ENCODE measurements at regions of chr12 and their contacts with region 1.

Region 1: GRCh38 chr12:125402874-125403789 is 337.9 kb downstream of the AACS start:
- DNase-seq: no peak
- ATAC-seq: no peak
- H3K4me3 ChIP-seq: no peak overlapping the region
- H3K27ac ChIP-seq: no peak overlapping the region
- H3K4me1 ChIP-seq: no peaks in the 10 kb centered on the region
- H3K27me3 ChIP-seq: no peaks in the 10 kb centered on the region

Region 2: GRCh38 chr12:125183187-125184067 is 219.7 kb before region 1 on chr12:
- intact Hi-C with region 1: loop called in 2 of 4 experiments (anchors 5 to 10 kb)
- DNase-seq: peak; percentile 75 to 89 (median 87)
- ATAC-seq: peak; percentile 61 to 77
- H3K4me3 ChIP-seq: no peak overlapping the region
- H3K27ac ChIP-seq: no peak overlapping the region
- H3K4me1 ChIP-seq: no peaks in the 10 kb centered on the region
- H3K27me3 ChIP-seq: no peaks in the 10 kb centered on the region

Region 3: GRCh38 chr12:125203145-125203765 is 199.9 kb before region 1 on chr12:
- intact Hi-C with region 1: loop called in 1 of 4 experiments (anchors 10 kb)
- DNase-seq: no peak
- ATAC-seq: no peak
- H3K4me3 ChIP-seq: no peak overlapping the region
- H3K27ac ChIP-seq: no peak overlapping the region
- H3K4me1 ChIP-seq: no peaks in the 10 kb centered on the region
- H3K27me3 ChIP-seq: no peaks in the 10 kb centered on the region

Region 4: DNA sequence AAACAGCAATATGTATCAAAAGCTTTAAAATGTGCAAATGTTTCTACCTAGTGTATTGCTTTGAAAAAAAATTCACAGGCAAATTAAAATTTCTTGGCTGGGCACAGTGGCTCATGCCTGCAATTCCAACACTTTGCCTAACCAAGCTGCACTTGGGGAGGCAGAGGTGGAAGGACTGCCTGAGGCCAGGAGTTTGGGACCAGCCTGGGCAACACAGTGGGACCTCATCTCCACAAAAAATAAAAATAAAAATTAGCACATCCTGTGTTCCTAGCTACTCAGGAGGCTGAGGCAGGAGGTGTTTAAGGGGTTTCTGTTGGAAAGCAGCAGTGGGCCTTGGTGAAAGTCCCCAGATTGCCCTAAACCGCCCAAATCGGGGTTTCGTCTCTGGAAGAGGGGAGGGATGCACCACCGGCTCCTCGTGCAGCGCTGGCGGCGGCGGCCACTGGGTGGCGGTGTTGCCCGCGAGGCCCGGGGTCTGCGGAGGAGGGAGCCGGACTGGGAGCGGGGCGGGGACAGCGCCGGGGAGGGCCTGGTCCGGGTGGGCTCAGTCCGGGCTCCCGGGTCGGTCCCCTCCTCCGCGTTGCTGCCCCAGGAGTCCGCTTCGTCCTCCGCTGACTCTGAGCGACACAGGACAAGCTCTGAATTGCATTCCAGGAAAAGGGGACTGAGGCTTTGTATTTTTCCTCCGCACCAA is 72.3 kb before region 1 on chr12:
- intact Hi-C with region 1: loop called in 1 of 4 experiments (anchors 5 kb)
- DNase-seq: peak; percentile 57 to 87 (median 87)
- ATAC-seq: peak; percentile 95
- H3K4me3 ChIP-seq: peak overlapping the region; percentile 65
- H3K27ac ChIP-seq: no peak overlapping the region
- H3K4me1 ChIP-seq: no peaks in the 10 kb centered on the region
- H3K27me3 ChIP-seq: no peaks in the 10 kb centered on the region

Measured in right cardiac atrium (tissue), 5 donors.